CD8-positive, alpha-beta T cell (primary cell): ENCODE measurements at regions of chr2 and their contacts with region 1.

Region 1: GRCh38 chr2:84846041-84846663 is 34.7 kb downstream of the TRABD2A start:
- DNase-seq: peak in 7 of 9 experiments; percentile 37 to 87 (median 65)
- ATAC-seq: peak; percentile 70
- H3K4me3 ChIP-seq: peak overlapping the region in 1 of 2 experiments; percentile 7
- H3K4me3 Mint-ChIP-seq: peak overlapping the region; percentile 65
- H3K27ac ChIP-seq: peak overlapping the region; percentile 68 to 88
- H3K27ac Mint-ChIP-seq: peak overlapping the region; percentile 94
- H3K4me1 ChIP-seq: peaks cover 97% of the 10 kb centered on the region
- H3K4me1 Mint-ChIP-seq: peaks cover 94% of the 10 kb centered on the region
- H3K27me3 ChIP-seq: no peaks in the 10 kb centered on the region
- H3K27me3 Mint-ChIP-seq: no peaks in the 10 kb centered on the region
- CTCF ChIP-seq: no peak

Region 2: DNA sequence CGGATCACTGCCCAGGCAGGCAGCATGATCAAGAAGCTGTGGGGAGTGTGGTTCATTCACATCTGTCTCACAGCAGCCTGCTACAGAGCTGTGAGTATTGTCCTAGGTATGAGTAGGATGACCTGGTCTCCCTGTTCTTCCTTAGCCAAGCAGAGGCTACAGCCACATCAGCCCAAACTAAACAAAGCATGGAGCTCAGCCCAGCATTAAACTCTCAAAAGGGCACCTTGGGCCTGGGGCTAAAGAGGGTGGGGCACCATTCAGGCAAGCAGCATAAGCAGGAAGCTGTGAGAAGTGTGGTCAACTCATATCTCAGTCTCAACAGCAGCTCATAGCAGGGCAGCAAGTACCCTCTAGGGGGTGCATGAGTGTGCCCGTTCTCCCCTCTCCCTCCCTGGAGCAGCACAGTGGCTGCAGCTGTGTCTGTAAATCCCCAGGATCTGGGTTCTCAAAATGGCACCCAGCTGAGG is 104.8 kb before region 1 on chr2:
- CTCF ChIA-PET with region 1: interaction called, 12 read pairs
- POLR2A ChIA-PET with region 1: interaction called, 5 read pairs
- intact Hi-C with region 1: no loop called
- DNase-seq: peak; percentile 13 to 80 (median 41)
- ATAC-seq: peak; percentile 99
- H3K4me3 ChIP-seq: no peak overlapping the region
- H3K4me3 Mint-ChIP-seq: no peak overlapping the region
- H3K27ac ChIP-seq: peak overlapping the region in 1 of 2 experiments; percentile 67
- H3K27ac Mint-ChIP-seq: peak overlapping the region; percentile 73
- H3K4me1 ChIP-seq: peaks cover 28% of the 10 kb centered on the region
- H3K4me1 Mint-ChIP-seq: peaks cover 37% of the 10 kb centered on the region
- H3K27me3 ChIP-seq: no peaks in the 10 kb centered on the region
- H3K27me3 Mint-ChIP-seq: no peaks in the 10 kb centered on the region
- CTCF ChIP-seq: peak; percentile 33

Region 3: DNA sequence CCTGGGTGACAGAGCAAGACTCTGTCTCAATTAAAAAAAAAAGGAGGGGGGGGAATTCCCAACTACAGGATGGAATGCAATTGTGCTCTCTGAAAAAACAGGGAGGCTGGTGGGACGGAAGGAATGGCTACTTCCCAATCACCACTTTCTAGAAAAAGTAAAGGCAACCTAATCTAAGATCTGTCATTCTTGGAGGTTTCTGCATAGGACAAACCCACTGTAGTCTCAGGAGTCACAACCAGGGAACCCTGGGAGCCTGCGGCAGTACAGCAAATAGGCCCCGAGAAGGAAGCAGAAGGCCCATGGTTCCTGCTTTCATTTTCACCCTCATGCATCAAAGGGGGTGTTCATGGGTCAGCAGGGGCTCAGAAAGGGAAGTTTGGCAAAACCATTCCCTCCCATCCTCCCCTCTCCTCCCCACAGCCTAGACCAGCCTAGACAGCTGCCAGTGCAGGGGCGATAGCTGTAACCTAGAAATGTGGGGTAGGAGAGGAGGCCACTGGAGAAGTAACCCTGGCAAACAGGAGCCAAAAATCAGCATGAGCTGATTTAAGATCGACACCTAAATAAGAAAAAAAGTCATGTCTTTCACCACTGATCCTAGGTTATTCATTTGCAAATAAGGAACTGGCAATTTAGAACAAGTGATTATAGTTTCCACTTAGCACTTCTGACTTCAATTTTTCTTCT is 13.2 kb before region 1 on chr2:
- CTCF ChIA-PET with region 1: interaction called, 9 read pairs
- POLR2A ChIA-PET with region 1: interaction called, 11 read pairs
- intact Hi-C with region 1: loop called in 1 of 2 experiments (anchors 2 kb)
- DNase-seq: peak in 1 of 9 experiments; percentile 56
- ATAC-seq: peak; percentile 51
- H3K4me3 ChIP-seq: peak overlapping the region in 1 of 2 experiments; percentile 6
- H3K4me3 Mint-ChIP-seq: peak overlapping the region; percentile 79
- H3K27ac ChIP-seq: peak overlapping the region; percentile 7 to 58
- H3K27ac Mint-ChIP-seq: no peak overlapping the region
- H3K4me1 ChIP-seq: peaks cover 90% of the 10 kb centered on the region
- H3K4me1 Mint-ChIP-seq: peaks cover 45% of the 10 kb centered on the region
- H3K27me3 ChIP-seq: peaks cover 0 to 3% of the 10 kb centered on the region in 2 experiments
- H3K27me3 Mint-ChIP-seq: no peaks in the 10 kb centered on the region
- CTCF ChIP-seq: no peak

Region 4: GRCh38 chr2:85032621-85033020 is 186.5 kb after region 1 on chr2:
- CTCF ChIA-PET with region 1: no interaction called
- POLR2A ChIA-PET with region 1: no interaction called
- intact Hi-C with region 1: no loop called
- DNase-seq: no peak
- ATAC-seq: no peak
- H3K4me3 ChIP-seq: no peak overlapping the region
- H3K4me3 Mint-ChIP-seq: no peak overlapping the region
- H3K27ac ChIP-seq: no peak overlapping the region
- H3K27ac Mint-ChIP-seq: no peak overlapping the region
- H3K4me1 ChIP-seq: no peaks in the 10 kb centered on the region
- H3K4me1 Mint-ChIP-seq: peaks cover 17% of the 10 kb centered on the region
- H3K27me3 ChIP-seq: no peaks in the 10 kb centered on the region
- H3K27me3 Mint-ChIP-seq: no peaks in the 10 kb centered on the region
- CTCF ChIP-seq: no peak

Region 5: GRCh38 chr2:86238354-86238753 is 1392.2 kb after region 1 on chr2:
- CTCF ChIA-PET with region 1: no interaction called
- POLR2A ChIA-PET with region 1: no interaction called
- intact Hi-C with region 1: no loop called
- DNase-seq: peak in 6 of 9 experiments; percentile 15 to 64 (median 30)
- ATAC-seq: peak; percentile 88
- H3K4me3 ChIP-seq: no peak overlapping the region
- H3K4me3 Mint-ChIP-seq: no peak overlapping the region
- H3K27ac ChIP-seq: no peak overlapping the region
- H3K27ac Mint-ChIP-seq: no peak overlapping the region
- H3K4me1 ChIP-seq: peaks cover 6% of the 10 kb centered on the region
- H3K4me1 Mint-ChIP-seq: peaks cover 11% of the 10 kb centered on the region
- H3K27me3 ChIP-seq: no peaks in the 10 kb centered on the region
- H3K27me3 Mint-ChIP-seq: peaks cover 6% of the 10 kb centered on the region
- CTCF ChIP-seq: no peak